ENCODE measurements at regions of chr19 and their contacts with region 1.

Region 1: DNA sequence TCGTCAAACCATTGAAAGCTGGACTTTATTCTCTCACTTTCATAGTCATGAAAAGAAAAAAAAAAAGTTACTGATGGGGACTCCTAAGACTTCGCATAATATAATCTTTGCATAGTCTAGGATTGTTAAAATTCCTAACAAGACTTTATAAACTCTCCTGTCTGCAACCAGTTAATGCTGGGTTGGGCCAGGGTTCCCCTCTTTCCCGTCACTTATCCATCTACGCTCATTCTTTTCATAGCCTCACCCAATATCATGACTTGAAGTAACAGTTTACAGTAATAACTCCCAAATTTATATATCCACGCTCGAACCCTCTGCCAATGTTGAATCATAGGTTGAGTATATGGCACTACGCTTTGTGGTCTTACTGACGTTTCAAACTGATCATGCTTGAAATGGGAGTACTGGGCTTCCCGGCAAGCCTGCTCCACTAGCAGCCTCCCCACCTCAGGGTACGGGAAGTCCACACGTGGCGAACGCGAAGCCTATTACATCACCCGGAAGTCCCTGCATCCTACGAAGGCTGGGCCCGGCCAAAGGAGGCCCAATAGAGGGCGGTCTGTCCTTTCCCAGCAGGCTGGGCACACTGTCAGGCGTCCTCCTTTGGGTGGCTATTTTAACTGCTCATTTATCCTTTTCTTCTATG is 743 bp upstream of the ZNF460 start:
- DNase-seq: peak; percentile 55 to 94 (median 75)
- ATAC-seq: peak; percentile 64
- H3K4me3 ChIP-seq: peak overlapping the region; percentile 54 to 99
- H3K4me3 Mint-ChIP-seq: no peak overlapping the region
- H3K27ac ChIP-seq: peak overlapping the region; percentile 86 to 93
- H3K27ac Mint-ChIP-seq: no peak overlapping the region
- H3K4me1 ChIP-seq: peaks cover 28% of the 10 kb centered on the region
- H3K4me1 Mint-ChIP-seq: peaks cover 33% of the 10 kb centered on the region
- H3K27me3 ChIP-seq: no peaks in the 10 kb centered on the region
- H3K27me3 Mint-ChIP-seq: no peaks in the 10 kb centered on the region
- CTCF ChIP-seq: no peak

Region 2: GRCh38 chr19:57171551-57172081 is 107.9 kb before region 1 on chr19:
- CTCF ChIA-PET with region 1: no interaction called
- POLR2A ChIA-PET with region 1: no interaction called
- intact Hi-C with region 1: loop called in 1 of 2 experiments (anchors 5 kb)
- DNase-seq: peak in 5 of 9 experiments; percentile 44 to 78 (median 53)
- ATAC-seq: peak; percentile 82
- H3K4me3 ChIP-seq: peak overlapping the region; percentile 33 to 41
- H3K4me3 Mint-ChIP-seq: peak overlapping the region; percentile 82
- H3K27ac ChIP-seq: peak overlapping the region in 1 of 2 experiments; percentile 42
- H3K27ac Mint-ChIP-seq: peak overlapping the region; percentile 81
- H3K4me1 ChIP-seq: peaks cover 4% of the 10 kb centered on the region
- H3K4me1 Mint-ChIP-seq: peaks cover 16% of the 10 kb centered on the region
- H3K27me3 ChIP-seq: no peaks in the 10 kb centered on the region
- H3K27me3 Mint-ChIP-seq: no peaks in the 10 kb centered on the region
- CTCF ChIP-seq: no peak

Region 3: GRCh38 chr19:57320180-57321084 is 40.9 kb after region 1 on chr19 and contains the start of gene ZNF543:
- CTCF ChIA-PET with region 1: no interaction called
- POLR2A ChIA-PET with region 1: no interaction called
- intact Hi-C with region 1: loop called (anchors 1 kb)
- DNase-seq: peak; percentile 85 to 96 (median 91)
- ATAC-seq: peak; percentile 95
- H3K4me3 ChIP-seq: peak within 1 kb of the TSS; percentile 61 to 94
- H3K4me3 Mint-ChIP-seq: peak within 1 kb of the TSS; percentile 92
- H3K27ac ChIP-seq: peak within 1 kb of the TSS; percentile 78 to 94
- H3K27ac Mint-ChIP-seq: peak within 1 kb of the TSS; percentile 96
- H3K4me1 ChIP-seq: peaks cover 21% of the 10 kb centered on the region
- H3K4me1 Mint-ChIP-seq: peaks cover 32% of the 10 kb centered on the region
- H3K27me3 ChIP-seq: peaks cover 6 to 7% of the 10 kb centered on the region in 2 experiments
- H3K27me3 Mint-ChIP-seq: peaks cover 22% of the 10 kb centered on the region
- CTCF ChIP-seq: no peak
- total RNA-seq, gene ZNF543: 4.3 to 4.9 TPM

Region 4: GRCh38 chr19:57350877-57351805 is 71.6 kb after region 1 on chr19 and contains the start of gene ZNF304:
- CTCF ChIA-PET with region 1: no interaction called
- POLR2A ChIA-PET with region 1: no interaction called
- intact Hi-C with region 1: loop called (anchors 1 kb)
- DNase-seq: peak; percentile 58 to 93 (median 81)
- ATAC-seq: peak; percentile 99
- H3K4me3 ChIP-seq: peak within 1 kb of the TSS; percentile 79 to 87
- H3K4me3 Mint-ChIP-seq: peak within 1 kb of the TSS; percentile 96
- H3K27ac ChIP-seq: peak within 1 kb of the TSS; percentile 68 to 73
- H3K27ac Mint-ChIP-seq: peak within 1 kb of the TSS; percentile 93
- H3K4me1 ChIP-seq: peaks cover 13% of the 10 kb centered on the region
- H3K4me1 Mint-ChIP-seq: peaks cover 32% of the 10 kb centered on the region
- H3K27me3 ChIP-seq: peaks cover 0 to 4% of the 10 kb centered on the region in 2 experiments
- H3K27me3 Mint-ChIP-seq: no peaks in the 10 kb centered on the region
- CTCF ChIP-seq: no peak
- total RNA-seq, gene ZNF304: 8.6 TPM

Region 5: DNA sequence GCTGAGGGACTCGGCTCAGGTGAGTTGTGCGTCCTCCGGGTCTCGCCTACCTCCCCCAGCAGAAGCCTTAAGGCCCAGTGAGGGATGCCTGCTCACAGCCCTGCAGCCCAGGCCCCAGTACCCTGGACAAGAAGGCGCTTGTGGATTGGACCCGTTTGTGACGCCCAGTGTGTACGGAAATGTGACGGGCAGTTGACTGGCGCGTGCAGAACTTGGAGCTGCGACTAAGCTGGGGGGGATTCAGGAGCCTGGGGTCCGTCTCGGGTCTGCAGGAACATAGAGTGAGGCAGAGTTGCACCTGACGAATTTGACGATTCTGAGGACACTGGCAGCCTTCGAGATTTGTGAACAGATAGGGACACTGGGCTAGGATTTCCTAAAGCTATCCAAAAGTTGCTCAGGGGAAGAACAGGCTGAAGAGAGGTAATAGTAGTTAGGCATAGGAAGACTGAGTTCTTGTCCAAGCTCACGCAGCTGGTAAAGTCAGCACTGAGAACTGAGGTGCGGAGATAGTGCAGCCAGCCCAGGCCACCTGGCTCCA is 402.8 kb after region 1 on chr19:
- CTCF ChIA-PET with region 1: no interaction called
- POLR2A ChIA-PET with region 1: no interaction called
- intact Hi-C with region 1: no loop called
- DNase-seq: no peak
- ATAC-seq: no peak
- H3K4me3 ChIP-seq: peak overlapping the region; percentile 91 to 94
- H3K4me3 Mint-ChIP-seq: peak overlapping the region; percentile 98
- H3K27ac ChIP-seq: peak overlapping the region; percentile 69 to 71
- H3K27ac Mint-ChIP-seq: peak overlapping the region; percentile 97
- H3K4me1 ChIP-seq: peaks cover 19% of the 10 kb centered on the region
- H3K4me1 Mint-ChIP-seq: peaks cover 36% of the 10 kb centered on the region
- H3K27me3 ChIP-seq: peaks cover 0 to 2% of the 10 kb centered on the region in 2 experiments
- H3K27me3 Mint-ChIP-seq: peaks cover 7% of the 10 kb centered on the region
- CTCF ChIP-seq: no peak